ENCODE measurements at regions of chr11 and their contacts with region 1.

Region 1: GRCh38 chr11:63945477-63946163 is 6.8 kb downstream of the NAA40 start:
- DNase-seq: peak; percentile 84
- H3K4me3 ChIP-seq: no peak overlapping the region; a peak in 1 of 4 replicates
- H3K27ac ChIP-seq: peak overlapping the region in 1 of 2 experiments; percentile 29; a peak in 2 of 4 replicates
- H3K4me1 ChIP-seq: peaks cover 9 to 22% of the 10 kb centered on the region in 2 experiments; a peak in 3 of 4 replicates
- H3K27me3 ChIP-seq: no peaks in the 10 kb centered on the region
- CTCF ChIP-seq: peak; percentile 71
- EP300 ChIP-seq: no peak
- RAD21 ChIP-seq: peak; percentile 89

Region 2: DNA sequence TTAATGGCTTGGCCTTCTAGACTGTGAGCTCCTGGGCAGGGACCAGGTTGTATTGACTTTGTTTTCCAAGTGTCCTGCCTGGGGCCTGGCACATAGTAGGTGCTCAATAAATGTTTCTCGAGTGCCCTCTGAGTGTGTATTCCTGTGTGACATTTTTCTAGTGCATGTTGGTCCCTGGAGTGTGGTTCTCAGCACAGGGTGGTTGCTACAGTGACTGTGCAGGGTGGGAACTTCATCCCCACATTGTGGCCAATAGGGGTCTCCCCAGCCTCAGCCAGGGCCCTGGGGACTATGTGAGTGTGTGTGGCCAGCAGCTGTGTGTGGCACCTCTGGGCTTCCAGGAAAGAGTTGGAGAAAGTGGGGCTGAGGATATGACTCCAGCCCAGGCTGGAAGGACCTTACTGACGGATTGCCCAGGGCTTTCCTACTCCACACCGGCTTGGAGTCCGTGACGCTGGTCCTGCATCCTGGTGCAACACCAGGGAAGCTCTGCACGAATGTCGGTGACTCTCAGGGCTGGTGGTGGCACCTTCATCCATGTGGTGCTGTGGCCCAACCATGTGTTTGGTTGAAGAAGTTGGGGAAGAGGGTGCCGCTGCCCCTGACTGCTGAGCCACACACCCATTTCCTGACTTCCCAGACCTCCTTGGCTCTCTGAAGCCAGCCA is 115.7 kb before region 1 on chr11:
- CTCF ChIA-PET with region 1: interaction called, 162 read pairs
- POLR2A ChIA-PET with region 1: no interaction called
- DNase-seq: peak; percentile 79
- H3K4me3 ChIP-seq: no peak overlapping the region
- H3K27ac ChIP-seq: no peak overlapping the region
- H3K4me1 ChIP-seq: no peaks in the 10 kb centered on the region; a peak in 1 of 4 replicates
- H3K27me3 ChIP-seq: no peaks in the 10 kb centered on the region
- CTCF ChIP-seq: peak; percentile 45
- EP300 ChIP-seq: no peak
- RAD21 ChIP-seq: peak; percentile 65

Region 3: GRCh38 chr11:63906585-63906984 is 39.0 kb before region 1 on chr11:
- CTCF ChIA-PET with region 1: interaction called, 22 read pairs
- POLR2A ChIA-PET with region 1: interaction called, 4 read pairs
- DNase-seq: peak; percentile 81
- H3K4me3 ChIP-seq: no peak overlapping the region
- H3K27ac ChIP-seq: no peak overlapping the region; a peak in 1 of 4 replicates
- H3K4me1 ChIP-seq: peaks cover 0 to 26% of the 10 kb centered on the region in 2 experiments; a peak in 1 of 4 replicates
- H3K27me3 ChIP-seq: no peaks in the 10 kb centered on the region
- CTCF ChIP-seq: peak; percentile 21
- EP300 ChIP-seq: no peak
- RAD21 ChIP-seq: no peak; the same call in 1 of the 2 replicates

Region 4: DNA sequence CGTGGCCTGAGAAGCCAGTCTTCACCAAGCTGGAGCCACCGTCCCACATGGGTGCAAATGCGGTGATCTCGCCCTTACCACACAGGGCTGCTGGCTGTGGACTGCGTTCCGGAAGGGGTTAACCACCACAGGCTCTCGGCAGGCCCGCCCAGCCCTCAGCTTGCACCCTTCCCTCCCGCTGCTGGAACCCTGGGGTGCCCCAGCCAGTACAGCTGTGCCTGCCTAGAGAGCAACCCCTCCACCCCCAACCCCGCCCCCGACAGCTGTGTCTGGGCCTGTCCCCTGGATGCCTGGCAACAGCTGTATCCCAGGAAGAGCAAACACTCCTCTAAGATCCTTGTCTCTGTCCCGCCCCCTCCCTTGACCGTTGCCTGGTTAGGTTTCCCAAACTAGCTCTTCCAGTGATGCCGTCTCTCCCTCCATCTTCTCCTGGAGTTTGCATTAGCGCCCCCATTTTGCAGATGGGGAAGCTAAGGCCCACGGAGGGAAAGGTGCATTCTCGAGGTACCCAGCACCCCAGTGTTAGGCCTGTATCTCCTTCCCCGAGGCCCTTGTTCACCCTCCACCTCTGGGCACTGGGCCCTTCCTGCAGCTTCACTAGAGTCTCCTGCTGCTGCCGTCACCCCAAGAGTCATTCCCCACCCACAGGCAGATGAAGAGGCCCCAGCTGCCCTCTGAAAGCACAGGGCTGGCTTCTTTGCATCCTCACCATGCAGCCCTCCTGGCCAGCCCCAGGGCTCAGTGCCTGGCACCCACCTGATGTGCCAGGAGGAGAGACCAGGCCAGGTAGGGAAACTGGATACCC is 16.2 kb after region 1 on chr11:
- CTCF ChIA-PET with region 1: interaction called, 41 read pairs
- POLR2A ChIA-PET with region 1: no interaction called
- DNase-seq: peak; percentile 83
- H3K4me3 ChIP-seq: no peak overlapping the region
- H3K27ac ChIP-seq: no peak overlapping the region
- H3K4me1 ChIP-seq: peaks cover 0 to 16% of the 10 kb centered on the region in 2 experiments; a peak in 1 of 4 replicates
- H3K27me3 ChIP-seq: no peaks in the 10 kb centered on the region
- CTCF ChIP-seq: no peak
- EP300 ChIP-seq: no peak
- RAD21 ChIP-seq: no peak

Measured in SK-N-SH (cell line).